A673 (cell line): ENCODE measurements at regions of chr4 and their contacts with region 1.

Region 1: DNA sequence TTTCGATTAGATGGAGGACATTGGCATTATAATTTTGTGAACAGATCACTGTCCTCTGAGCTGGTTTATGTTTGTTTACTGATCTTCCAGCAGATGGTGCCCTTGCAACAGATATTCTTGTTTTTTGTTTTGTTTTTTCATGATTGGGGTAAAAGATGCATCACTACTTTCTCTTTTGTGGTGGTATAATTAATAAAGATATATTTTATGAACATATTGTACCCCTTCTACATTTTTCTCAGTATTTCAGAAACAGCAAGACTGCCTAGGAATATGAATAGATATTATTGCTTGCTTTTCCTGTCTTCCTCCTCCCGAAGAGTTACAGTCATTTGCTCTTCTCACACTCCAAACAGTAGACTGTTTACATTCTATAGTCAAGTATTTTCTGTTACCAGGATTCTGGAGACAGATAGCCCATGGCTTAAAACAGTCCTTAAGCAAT is 905.2 kb downstream of the TRAM1L1 start:
- DNase-seq: peak; percentile 73
- H3K4me3 ChIP-seq: peak overlapping the region; percentile 31
- H3K27ac ChIP-seq: peak overlapping the region; percentile 97
- H3K4me1 ChIP-seq: peaks cover 58% of the 10 kb centered on the region
- H3K27me3 ChIP-seq: no peaks in the 10 kb centered on the region
- CTCF ChIP-seq: peak; percentile 78

Region 2: GRCh38 chr4:114980932-114981708 is 1199.1 kb before region 1 on chr4:
- CTCF ChIA-PET with region 1: no interaction called
- POLR2A ChIA-PET with region 1: no interaction called
- intact Hi-C with region 1: loop called (anchors 5 kb)
- DNase-seq: peak; percentile 93
- H3K4me3 ChIP-seq: no peak overlapping the region
- H3K27ac ChIP-seq: peak overlapping the region; percentile 77
- H3K4me1 ChIP-seq: peaks cover 53% of the 10 kb centered on the region
- H3K27me3 ChIP-seq: no peaks in the 10 kb centered on the region
- CTCF ChIP-seq: no peak

Region 3: DNA sequence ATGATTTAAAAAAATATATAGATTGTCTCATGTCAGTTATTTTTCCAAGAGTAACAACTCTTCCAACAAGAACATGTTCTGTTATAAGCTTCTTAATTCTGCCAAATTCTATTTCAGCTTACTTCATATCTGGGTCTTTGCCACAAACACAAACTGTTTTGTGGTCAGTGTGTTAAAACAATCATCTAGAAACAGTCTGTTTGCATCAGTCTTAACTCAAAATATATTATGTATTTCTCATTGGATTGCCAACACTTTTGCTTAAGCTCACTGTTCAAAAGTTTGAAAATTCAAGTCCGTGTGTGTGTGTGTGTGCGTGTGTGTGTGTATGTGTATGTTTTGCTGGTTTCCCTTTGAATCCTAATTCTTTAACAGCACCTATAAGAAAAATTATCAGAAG is 314.4 kb before region 1 on chr4:
- CTCF ChIA-PET with region 1: no interaction called
- POLR2A ChIA-PET with region 1: interaction called, 18 read pairs
- intact Hi-C with region 1: loop called (anchors 1 kb)
- DNase-seq: peak; percentile 73
- H3K4me3 ChIP-seq: peak overlapping the region; percentile 13
- H3K27ac ChIP-seq: peak overlapping the region; percentile 99
- H3K4me1 ChIP-seq: peaks cover 36% of the 10 kb centered on the region
- H3K27me3 ChIP-seq: no peaks in the 10 kb centered on the region
- CTCF ChIP-seq: no peak

Region 4: GRCh38 chr4:116358588-116359222 is 178.5 kb after region 1 on chr4:
- CTCF ChIA-PET with region 1: no interaction called
- POLR2A ChIA-PET with region 1: no interaction called
- intact Hi-C with region 1: loop called (anchors 5 kb)
- DNase-seq: peak; percentile 89
- H3K4me3 ChIP-seq: no peak overlapping the region
- H3K27ac ChIP-seq: no peak overlapping the region
- H3K4me1 ChIP-seq: no peaks in the 10 kb centered on the region
- H3K27me3 ChIP-seq: no peaks in the 10 kb centered on the region
- CTCF ChIP-seq: peak; percentile 74

Region 5: DNA sequence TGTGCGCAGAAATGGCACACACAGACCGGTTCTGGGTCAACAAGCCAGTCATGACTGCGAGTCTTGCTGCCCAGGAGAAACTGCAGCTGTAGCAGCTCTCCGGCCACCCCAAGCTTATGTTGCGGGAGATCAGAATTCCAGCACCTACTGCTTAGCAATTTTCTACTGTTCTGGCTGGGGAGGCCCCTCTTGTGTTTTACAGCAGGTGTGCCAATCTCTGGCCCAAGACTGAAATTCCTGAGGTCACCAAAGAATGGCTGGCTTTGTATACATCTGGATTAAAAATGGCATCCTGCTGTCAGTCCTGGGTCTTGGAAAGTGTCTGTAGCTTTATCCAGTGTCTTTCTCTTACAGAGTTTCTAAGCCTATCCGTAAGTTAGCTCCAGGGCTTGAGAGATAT is 974.1 kb after region 1 on chr4:
- CTCF ChIA-PET with region 1: no interaction called
- POLR2A ChIA-PET with region 1: no interaction called
- intact Hi-C with region 1: loop called (anchors 5 kb)
- DNase-seq: peak; percentile 33
- H3K4me3 ChIP-seq: peak overlapping the region; percentile 11
- H3K27ac ChIP-seq: peak overlapping the region; percentile 85
- H3K4me1 ChIP-seq: peaks cover 14% of the 10 kb centered on the region
- H3K27me3 ChIP-seq: no peaks in the 10 kb centered on the region
- CTCF ChIP-seq: no peak

Region 6: GRCh38 chr4:117700111-117700892 is 1520.1 kb after region 1 on chr4:
- CTCF ChIA-PET with region 1: interaction called, 4 read pairs
- POLR2A ChIA-PET with region 1: no interaction called
- intact Hi-C with region 1: loop called (anchors 5 kb)
- DNase-seq: peak; percentile 22
- H3K4me3 ChIP-seq: no peak overlapping the region
- H3K27ac ChIP-seq: no peak overlapping the region
- H3K4me1 ChIP-seq: no peaks in the 10 kb centered on the region
- H3K27me3 ChIP-seq: no peaks in the 10 kb centered on the region
- CTCF ChIP-seq: peak; percentile 60